ENCODE measurements at regions of chr1 and their contacts with region 1.

Region 1: DNA sequence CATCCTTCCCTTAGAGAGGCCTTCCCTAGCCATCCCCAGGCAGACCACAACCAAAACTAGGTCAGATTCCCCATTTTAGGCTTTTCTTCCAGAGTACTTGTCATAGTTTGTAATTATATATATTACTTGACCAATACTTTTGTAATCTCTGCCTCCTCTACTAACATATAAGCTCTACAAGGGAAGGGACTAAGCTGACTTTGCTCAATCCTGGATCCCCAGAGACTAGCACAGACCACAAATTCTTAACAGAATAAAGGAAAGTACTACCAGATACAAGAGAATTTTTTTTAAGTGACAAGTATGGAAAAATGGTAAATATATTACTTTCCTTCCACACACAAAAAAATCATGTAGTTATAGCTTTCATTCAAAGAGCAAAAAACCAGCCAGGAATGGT is 2.0 kb downstream of the ZMYM6 start:
- DNase-seq: no peak
- H3K4me3 ChIP-seq: peak overlapping the region in 6 of 8 donors; percentile 72 to 90 (median 82)
- H3K27ac ChIP-seq: peak overlapping the region in 4 of 8 donors; percentile 91 to 95 (median 94)
- H3K4me1 ChIP-seq: peaks cover 16 to 68% (median 35%) of the 10 kb centered on the region in 6 donors
- H3K27me3 ChIP-seq: no peaks in the 10 kb centered on the region
- CTCF ChIP-seq: no peak
- POLR2A ChIP-seq: no peak

Region 2: GRCh38 chr1:34681480-34682451 is 348.0 kb before region 1 on chr1:
- intact Hi-C with region 1: no loop called
- DNase-seq: no peak
- H3K4me3 ChIP-seq: no peak overlapping the region
- H3K27ac ChIP-seq: no peak overlapping the region
- H3K4me1 ChIP-seq: peaks cover 0 to 8% (median 2%) of the 10 kb centered on the region in 6 donors
- H3K27me3 ChIP-seq: peaks cover 0 to 23% (median 0%) of the 10 kb centered on the region in 7 donors
- CTCF ChIP-seq: peak; percentile 17 to 81 (median 61)
- POLR2A ChIP-seq: no peak

Region 3: GRCh38 chr1:35278886-35279554 is 249.3 kb after region 1 on chr1:
- intact Hi-C with region 1: loop called (anchors 10 kb)
- DNase-seq: no peak
- H3K4me3 ChIP-seq: no peak overlapping the region
- H3K27ac ChIP-seq: no peak overlapping the region
- H3K4me1 ChIP-seq: peaks cover 0 to 25% (median 8%) of the 10 kb centered on the region in 6 donors
- H3K27me3 ChIP-seq: no peaks in the 10 kb centered on the region
- CTCF ChIP-seq: no peak
- POLR2A ChIP-seq: no peak